ENCODE measurements at regions of chr17 and their contacts with region 1.

Region 1: DNA sequence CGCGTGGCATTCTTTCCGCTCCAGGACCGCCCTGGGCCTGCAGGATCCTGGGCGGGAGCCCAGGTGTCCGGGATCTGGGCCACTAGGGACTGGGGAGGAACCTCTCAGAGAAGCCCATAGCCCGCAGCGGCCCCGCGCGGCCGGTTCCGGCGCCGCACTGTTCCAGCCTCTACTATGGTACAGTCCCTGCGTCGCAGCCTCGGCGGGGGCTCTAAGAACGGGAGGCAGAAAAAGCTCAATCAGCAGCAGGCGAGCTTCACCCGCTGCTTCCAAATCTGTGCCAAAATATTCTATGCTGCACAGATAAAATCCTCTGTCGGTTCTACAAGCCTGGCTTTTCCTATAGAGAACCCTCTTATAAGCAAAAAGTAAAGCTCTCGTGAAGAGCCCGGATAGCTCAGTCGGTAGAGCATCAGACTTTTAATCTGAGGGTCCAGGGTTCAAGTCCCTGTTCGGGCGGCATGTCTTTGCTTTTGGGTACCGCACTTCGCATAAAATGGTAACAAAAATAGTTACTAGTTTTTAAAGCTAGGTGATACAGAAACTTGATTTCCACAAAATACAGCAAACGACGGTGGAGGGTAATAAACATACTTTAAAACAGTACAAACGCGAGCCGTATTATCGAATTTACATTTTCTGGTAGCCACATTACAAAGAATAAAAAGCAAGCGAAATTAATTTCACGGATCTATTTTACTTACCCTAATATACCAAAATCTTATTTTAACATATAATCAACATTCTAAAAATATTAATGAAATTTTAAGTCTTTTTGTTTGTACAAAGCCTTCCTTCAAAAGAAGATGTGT is 661 bp upstream of the ALOXE3 start:
- DNase-seq: no peak
- H3K4me3 ChIP-seq: peak overlapping the region; percentile 53
- H3K27me3 ChIP-seq: peaks cover 17% of the 10 kb centered on the region
- CTCF ChIP-seq: peak; percentile 97

Region 2: GRCh38 chr17:7897773-7898172 is 221.2 kb before region 1 on chr17:
- CTCF ChIA-PET with region 1: no interaction called
- POLR2A ChIA-PET with region 1: no interaction called
- DNase-seq: no peak
- H3K4me3 ChIP-seq: no peak overlapping the region
- H3K27me3 ChIP-seq: no peaks in the 10 kb centered on the region
- CTCF ChIP-seq: peak; percentile 63

Region 3: GRCh38 chr17:7951143-7951803 is 167.7 kb before region 1 on chr17:
- CTCF ChIA-PET with region 1: no interaction called
- POLR2A ChIA-PET with region 1: no interaction called
- DNase-seq: no peak
- H3K4me3 ChIP-seq: no peak overlapping the region
- H3K27me3 ChIP-seq: no peaks in the 10 kb centered on the region
- CTCF ChIP-seq: no peak

Region 4: DNA sequence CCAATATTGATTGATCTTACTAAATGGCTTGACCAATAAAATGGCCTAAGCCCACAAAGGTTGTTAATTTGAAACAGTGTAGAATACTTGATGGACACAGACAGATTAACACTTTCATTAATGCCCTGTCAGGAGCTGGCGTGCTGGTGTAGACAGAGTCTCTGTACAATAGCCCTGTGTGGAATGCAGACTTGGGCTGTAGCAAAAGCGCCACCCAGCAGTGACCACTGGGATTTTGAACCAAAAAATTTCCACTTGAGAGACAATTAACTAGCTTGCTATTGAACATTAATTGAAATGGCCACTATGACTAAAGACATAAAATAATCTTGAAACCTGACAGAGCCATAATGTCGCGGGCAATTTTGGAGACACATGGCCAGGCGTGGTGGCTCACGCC is 136.3 kb before region 1 on chr17:
- CTCF ChIA-PET with region 1: interaction called, 4 read pairs
- POLR2A ChIA-PET with region 1: interaction called, 13 read pairs
- DNase-seq: no peak
- H3K4me3 ChIP-seq: no peak overlapping the region
- H3K27me3 ChIP-seq: no peaks in the 10 kb centered on the region
- CTCF ChIP-seq: peak; percentile 26

Region 5: DNA sequence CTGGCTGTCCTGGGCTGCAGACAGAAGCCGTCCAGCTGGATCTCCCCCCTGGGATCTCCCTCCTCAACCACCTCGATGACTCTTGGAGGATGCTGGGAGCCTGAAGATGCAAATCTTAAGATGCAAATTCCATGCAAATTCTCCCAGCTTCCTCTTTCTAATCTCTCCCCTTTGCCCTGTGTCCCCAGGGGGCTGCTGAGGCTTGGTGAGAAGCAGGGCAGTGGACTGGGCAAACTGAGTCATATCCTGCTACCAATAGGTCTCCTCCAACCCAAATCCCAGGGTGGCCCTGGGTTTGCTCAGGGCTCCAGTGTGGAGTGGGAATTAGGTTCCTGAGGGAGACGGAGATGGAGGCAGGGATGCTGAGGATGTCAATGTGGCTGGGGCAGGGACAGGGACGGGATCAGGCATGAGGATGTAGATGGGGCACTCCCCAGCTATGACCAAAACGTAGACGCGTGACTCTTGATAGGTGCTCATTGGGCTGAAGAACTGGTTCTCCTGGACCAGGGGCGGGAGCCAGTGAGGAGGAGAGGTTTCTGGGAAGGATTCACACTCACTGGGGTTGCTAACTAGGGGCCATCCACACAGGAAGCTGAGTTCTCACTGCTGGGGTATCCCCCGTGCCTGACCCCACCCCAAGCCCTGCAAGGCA is 27.8 kb before region 1 on chr17:
- CTCF ChIA-PET with region 1: interaction called, 26 read pairs
- POLR2A ChIA-PET with region 1: no interaction called
- DNase-seq: no peak
- H3K4me3 ChIP-seq: no peak overlapping the region
- H3K27me3 ChIP-seq: peaks cover 25% of the 10 kb centered on the region
- CTCF ChIP-seq: no peak

Region 6: DNA sequence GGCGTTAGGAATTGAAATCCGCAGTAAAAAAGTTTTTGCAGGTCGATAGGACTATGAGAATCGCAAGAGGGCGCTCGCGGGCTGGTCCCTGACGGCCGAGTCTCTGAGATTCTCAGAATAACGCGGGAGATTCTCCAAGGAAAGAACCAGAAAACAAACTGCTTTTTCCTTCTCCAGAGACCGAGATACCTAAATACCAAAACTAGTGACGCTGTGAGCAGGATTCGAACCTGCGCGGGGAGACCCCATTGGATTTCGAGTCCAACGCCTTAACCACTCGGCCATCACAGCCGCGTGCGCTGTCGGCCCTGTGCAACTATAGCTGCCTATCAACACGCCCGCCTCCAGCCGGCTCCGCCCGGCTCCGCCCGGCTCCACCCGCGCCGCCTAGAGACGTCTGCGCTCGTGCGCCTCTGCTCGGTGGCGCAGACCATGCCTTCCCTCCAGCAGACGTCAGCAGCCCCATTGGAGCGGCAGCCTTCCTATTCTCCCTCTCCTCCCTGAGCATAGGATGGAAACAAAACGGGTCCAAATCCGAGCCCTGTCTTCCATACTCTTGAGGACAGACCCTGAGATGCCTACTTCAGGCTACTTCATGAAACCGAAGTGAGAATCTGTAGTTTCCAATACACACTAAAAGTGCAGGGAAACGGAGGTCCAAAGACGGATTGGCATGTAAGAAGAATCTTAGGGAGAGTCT is 19.8 kb after region 1 on chr17:
- CTCF ChIA-PET with region 1: interaction called, 17 read pairs
- POLR2A ChIA-PET with region 1: interaction called, 16 read pairs
- DNase-seq: peak; percentile 92
- H3K4me3 ChIP-seq: peak overlapping the region; percentile 47
- H3K27me3 ChIP-seq: no peaks in the 10 kb centered on the region
- CTCF ChIP-seq: peak; percentile 86

Region 7: GRCh38 chr17:8222630-8223356 is 103.8 kb after region 1 on chr17:
- CTCF ChIA-PET with region 1: interaction called, 21 read pairs
- POLR2A ChIA-PET with region 1: no interaction called
- DNase-seq: peak; percentile 68
- H3K4me3 ChIP-seq: peak overlapping the region; percentile 53
- H3K27me3 ChIP-seq: no peaks in the 10 kb centered on the region
- CTCF ChIP-seq: no peak

Region 8: GRCh38 chr17:8237175-8237574 is 118.2 kb after region 1 on chr17:
- CTCF ChIA-PET with region 1: no interaction called
- POLR2A ChIA-PET with region 1: no interaction called
- DNase-seq: no peak
- H3K4me3 ChIP-seq: no peak overlapping the region
- H3K27me3 ChIP-seq: no peaks in the 10 kb centered on the region
- CTCF ChIP-seq: no peak

Region 9: GRCh38 chr17:8294814-8295316 is 175.9 kb after region 1 on chr17:
- CTCF ChIA-PET with region 1: no interaction called
- POLR2A ChIA-PET with region 1: no interaction called
- DNase-seq: no peak
- H3K4me3 ChIP-seq: peak overlapping the region; percentile 53
- H3K27me3 ChIP-seq: no peaks in the 10 kb centered on the region
- CTCF ChIP-seq: no peak

Measured in BJ (cell line).